Activated T-helper 1 cell treated with anti-CD3 and anti-CD28 coated beads, Interleukin-12 subunit alpha, Interleukin-12 subunit beta, Interleukin-2, Interleukin-4 antibody, amounts not matched to agents 30 ng/mL and 10 ng/mL and 1 ng/mL, durations not matched to agents 14 hours and 24 hours and 36 hours (primary cell): ENCODE measurements at regions of chr7 and their contacts with region 1.

Region 1: DNA sequence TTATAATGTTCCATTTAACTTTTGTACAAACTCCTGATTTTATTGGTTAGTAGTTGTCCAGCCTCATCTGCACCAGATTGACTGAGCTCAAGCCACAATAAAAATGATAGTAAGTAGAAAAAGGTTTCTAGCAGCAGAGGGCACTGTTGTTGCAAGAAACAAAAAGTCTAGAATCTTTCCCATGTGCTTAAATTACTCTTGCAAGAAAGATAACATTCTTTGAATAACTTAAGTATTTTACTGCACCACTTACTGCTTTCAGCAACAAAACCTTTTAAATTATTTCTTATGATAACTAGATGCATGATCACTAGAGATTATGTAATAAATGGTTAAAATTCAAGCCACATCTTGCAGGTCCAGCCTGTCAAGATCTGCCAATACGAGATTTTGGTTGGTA is 27.0 kb downstream of the LMOD2 start:
- DNase-seq: no peak
- H3K4me3 Mint-ChIP-seq: no peak overlapping the region
- H3K27ac Mint-ChIP-seq: no peak overlapping the region
- H3K4me1 Mint-ChIP-seq: no peaks in the 10 kb centered on the region
- H3K27me3 Mint-ChIP-seq: no peaks in the 10 kb centered on the region

Region 2: GRCh38 chr7:123643495-123644441 is 38.9 kb before region 1 on chr7:
- intact Hi-C with region 1: no loop called
- DNase-seq: no peak
- H3K4me3 Mint-ChIP-seq: no peak overlapping the region
- H3K27ac Mint-ChIP-seq: no peak overlapping the region
- H3K4me1 Mint-ChIP-seq: no peaks in the 10 kb centered on the region
- H3K27me3 Mint-ChIP-seq: peaks cover 17% of the 10 kb centered on the region

Region 3: GRCh38 chr7:123705211-123705901 is 22.7 kb after region 1 on chr7:
- intact Hi-C with region 1: loop called (anchors 1 kb)
- DNase-seq: no peak
- H3K4me3 Mint-ChIP-seq: no peak overlapping the region
- H3K27ac Mint-ChIP-seq: peak overlapping the region; percentile 27
- H3K4me1 Mint-ChIP-seq: peaks cover 10% of the 10 kb centered on the region
- H3K27me3 Mint-ChIP-seq: no peaks in the 10 kb centered on the region

Region 4: DNA sequence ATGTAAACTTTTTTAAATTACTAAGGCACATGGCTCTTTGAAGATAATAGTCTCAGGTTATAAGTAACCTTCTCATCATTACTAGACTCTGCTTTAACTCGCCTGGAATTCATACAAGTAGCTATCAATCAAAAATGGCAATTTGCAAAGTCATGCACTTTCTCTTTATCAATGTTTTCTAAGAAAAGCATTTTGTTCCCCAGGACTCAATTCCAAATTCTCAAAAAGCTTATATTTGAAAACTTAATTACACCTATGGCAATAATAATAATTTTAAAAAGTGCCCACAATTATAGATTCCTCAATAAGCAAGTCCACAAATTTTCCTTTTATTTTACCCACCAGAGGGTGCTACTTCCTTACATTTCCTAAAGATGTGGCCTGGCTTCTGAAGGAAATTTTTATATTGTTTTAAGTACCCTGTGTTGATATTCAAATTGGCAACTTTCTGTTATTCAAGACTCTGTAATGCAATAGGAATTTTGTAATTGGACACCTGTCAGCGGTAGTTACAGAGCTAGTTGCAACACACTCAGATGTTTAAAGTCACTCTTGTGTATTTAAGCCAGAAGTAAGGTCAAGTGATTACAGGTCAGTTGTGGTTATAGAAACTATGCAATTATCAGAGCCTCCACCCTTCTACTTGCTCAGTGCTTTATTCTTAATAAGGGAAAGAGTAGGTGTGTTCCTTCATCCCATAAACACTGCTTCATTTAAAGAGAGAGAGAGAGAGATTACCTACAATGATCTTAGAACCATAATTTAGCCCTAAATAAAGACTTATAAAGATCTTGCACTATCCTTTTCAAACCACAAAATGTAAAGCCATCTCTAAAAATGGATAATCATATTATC is 115.2 kb after region 1 on chr7:
- intact Hi-C with region 1: loop called (anchors 2 kb)
- DNase-seq: no peak
- H3K4me3 Mint-ChIP-seq: no peak overlapping the region
- H3K27ac Mint-ChIP-seq: no peak overlapping the region
- H3K4me1 Mint-ChIP-seq: no peaks in the 10 kb centered on the region
- H3K27me3 Mint-ChIP-seq: no peaks in the 10 kb centered on the region